Endothelial cell of umbilical vein (primary cell): ENCODE measurements at regions of chr14 and their contacts with region 1.

Region 1: GRCh38 chr14:37150414-37150813 is 22.0 kb downstream of the SLC25A21 start:
- DNase-seq: peak; percentile 58
- H3K4me3 ChIP-seq: no peak overlapping the region
- H3K27ac ChIP-seq: no peak overlapping the region
- H3K4me1 ChIP-seq: no peaks in the 10 kb centered on the region
- H3K27me3 ChIP-seq: peaks cover 0 to 2% of the 10 kb centered on the region in 2 experiments
- CTCF ChIP-seq: peak; percentile 55 to 59
- POLR2A ChIP-seq: no peak

Region 2: GRCh38 chr14:36070031-36070719 is 1080.2 kb before region 1 on chr14:
- CTCF ChIA-PET with region 1: interaction called, 17 read pairs
- POLR2A ChIA-PET with region 1: no interaction called
- dilution Hi-C with region 1: no loop called
- intact Hi-C with region 1: no loop called
- DNase-seq: peak; percentile 47
- H3K4me3 ChIP-seq: no peak overlapping the region
- H3K27ac ChIP-seq: no peak overlapping the region
- H3K4me1 ChIP-seq: no peaks in the 10 kb centered on the region
- H3K27me3 ChIP-seq: peaks cover 0 to 2% of the 10 kb centered on the region in 2 experiments
- CTCF ChIP-seq: peak; percentile 69 to 79
- POLR2A ChIP-seq: no peak

Region 3: GRCh38 chr14:36647824-36648753 is 502.3 kb before region 1 on chr14:
- CTCF ChIA-PET with region 1: interaction called, 49 read pairs
- POLR2A ChIA-PET with region 1: no interaction called
- dilution Hi-C with region 1: loop called (anchors 10 kb)
- intact Hi-C with region 1: loop called (anchors 1 kb)
- DNase-seq: peak; percentile 40
- H3K4me3 ChIP-seq: peak overlapping the region in 2 of 3 experiments; percentile 31 to 35
- H3K27ac ChIP-seq: no peak overlapping the region
- H3K4me1 ChIP-seq: peaks cover 10% of the 10 kb centered on the region
- H3K27me3 ChIP-seq: peaks cover 59 to 91% of the 10 kb centered on the region in 2 experiments
- CTCF ChIP-seq: peak; percentile 42 to 47
- POLR2A ChIP-seq: no peak

Region 4: GRCh38 chr14:36941783-36942521 is 208.5 kb before region 1 on chr14:
- CTCF ChIA-PET with region 1: interaction called, 40 read pairs
- POLR2A ChIA-PET with region 1: no interaction called
- dilution Hi-C with region 1: no loop called
- intact Hi-C with region 1: loop called (anchors 2 kb)
- DNase-seq: peak; percentile 82
- H3K4me3 ChIP-seq: no peak overlapping the region
- H3K27ac ChIP-seq: no peak overlapping the region
- H3K4me1 ChIP-seq: no peaks in the 10 kb centered on the region
- H3K27me3 ChIP-seq: no peaks in the 10 kb centered on the region
- CTCF ChIP-seq: peak; percentile 84 to 89
- POLR2A ChIP-seq: no peak

Region 5: GRCh38 chr14:37131205-37131604 is 19.2 kb before region 1 on chr14:
- CTCF ChIA-PET with region 1: interaction called, 16 read pairs
- POLR2A ChIA-PET with region 1: interaction called, 4 read pairs
- dilution Hi-C with region 1: no loop called
- intact Hi-C with region 1: no loop called
- DNase-seq: no peak
- H3K4me3 ChIP-seq: no peak overlapping the region
- H3K27ac ChIP-seq: no peak overlapping the region
- H3K4me1 ChIP-seq: no peaks in the 10 kb centered on the region
- H3K27me3 ChIP-seq: peaks cover 0 to 2% of the 10 kb centered on the region in 2 experiments
- CTCF ChIP-seq: no peak
- POLR2A ChIP-seq: no peak

Region 6: DNA sequence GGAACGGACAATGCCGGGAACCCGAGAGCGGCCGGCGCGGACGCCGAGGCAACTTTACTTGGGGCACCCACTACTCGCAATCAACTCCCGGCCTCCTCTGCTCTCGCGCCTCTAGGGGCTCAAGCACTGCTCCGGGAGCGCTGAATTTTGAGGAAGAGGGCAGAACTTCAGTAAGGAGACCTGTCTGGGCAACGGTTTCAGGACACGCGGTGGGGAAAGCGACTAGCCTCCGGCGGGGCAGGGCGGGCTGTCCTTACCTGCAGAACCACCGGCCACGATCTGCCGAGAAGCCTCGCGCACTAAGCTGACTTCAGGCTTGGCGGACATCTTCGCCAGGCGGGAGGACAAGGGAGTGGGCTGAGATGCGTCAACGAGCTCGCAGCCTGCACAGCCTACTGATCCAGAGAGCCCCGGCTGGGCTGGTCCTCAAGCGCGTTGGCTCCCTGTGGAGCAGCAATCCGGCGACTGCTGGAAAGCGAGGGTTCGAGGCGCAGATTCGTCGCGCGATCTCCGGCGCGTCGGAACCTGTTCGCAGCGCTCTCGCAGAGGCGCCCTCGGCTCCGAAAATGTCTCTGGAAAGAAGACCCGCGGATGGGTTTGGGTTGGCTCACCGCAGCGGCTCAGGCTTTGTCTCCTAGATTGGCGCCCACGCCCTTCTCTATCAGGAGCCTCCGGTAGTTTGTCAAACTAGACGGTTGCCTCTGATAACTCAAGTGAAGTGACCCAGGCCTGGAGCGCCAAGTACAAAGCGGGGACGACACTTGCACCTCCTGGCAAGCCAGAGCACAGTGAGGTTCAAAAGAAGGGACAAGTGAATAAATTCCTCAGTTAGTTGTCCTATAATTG is 21.8 kb after region 1 on chr14 and contains the start of gene SLC25A21:
- CTCF ChIA-PET with region 1: interaction called, 23 read pairs
- POLR2A ChIA-PET with region 1: no interaction called
- dilution Hi-C with region 1: no loop called
- intact Hi-C with region 1: no loop called
- DNase-seq: peak; percentile 92
- H3K4me3 ChIP-seq: peak within 1 kb of the TSS; percentile 57 to 81 (median 62)
- H3K27ac ChIP-seq: peak within 1 kb of the TSS; percentile 85
- H3K4me1 ChIP-seq: peaks cover 12% of the 10 kb centered on the region
- H3K27me3 ChIP-seq: no peaks in the 10 kb centered on the region
- CTCF ChIP-seq: peak in 1 of 2 donors; percentile 40
- POLR2A ChIP-seq: peak; percentile 58
- total RNA-seq, gene SLC25A21: 0.92 and 1.4 TPM in 2 replicates